ENCODE measurements at regions of chr19 and their contacts with region 1.

Region 1: GRCh38 chr19:48993175-48994034 is at the starts of genes GYS1 and RUVBL2:
- DNase-seq: peak; percentile 98
- H3K4me3 ChIP-seq: peak within 1 kb of the TSS; percentile 94
- H3K27me3 ChIP-seq: no peaks in the 10 kb centered on the region
- CTCF ChIP-seq: peak; percentile 99
- polyA plus RNA-seq, gene GYS1: 36.0 and 49.7 TPM in 2 replicates
- polyA plus RNA-seq, gene RUVBL2: 138 and 221 TPM in 2 replicates

Region 2: DNA sequence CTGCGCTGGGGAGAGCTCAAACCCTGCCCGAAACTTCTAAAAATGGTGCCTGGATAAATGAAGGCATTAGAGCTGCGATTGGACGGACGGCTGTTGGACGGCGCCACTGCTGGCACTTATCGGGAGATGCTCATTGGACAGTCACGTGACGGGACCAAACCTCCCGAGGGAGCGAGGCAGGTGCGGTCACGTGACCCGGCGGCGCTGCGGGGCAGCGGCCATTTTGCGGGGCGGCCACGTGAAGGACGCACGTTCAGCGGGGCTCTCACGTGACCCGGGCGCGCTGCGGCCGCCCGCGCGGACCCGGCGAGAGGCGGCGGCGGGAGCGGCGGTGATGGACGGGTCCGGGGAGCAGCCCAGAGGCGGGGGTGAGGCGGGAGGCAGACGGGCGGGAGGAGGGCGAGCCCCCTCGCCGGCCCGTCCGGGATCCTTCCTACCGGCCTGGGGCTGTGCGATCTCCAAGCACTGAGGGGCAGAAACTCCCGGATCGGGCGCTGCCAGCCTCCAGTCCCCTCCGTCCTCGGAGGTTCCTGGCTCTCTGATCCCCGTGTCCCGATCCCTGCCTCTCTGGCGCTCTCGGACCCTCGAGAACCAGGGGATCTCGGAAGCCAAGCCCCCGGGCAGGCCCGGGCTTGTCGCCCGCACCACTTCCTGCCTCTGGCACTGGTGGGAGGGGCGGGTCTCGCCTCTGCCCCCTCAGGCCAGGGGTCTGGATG is 38.7 kb before region 1 on chr19 and contains the start of gene BAX:
- CTCF ChIA-PET with region 1: interaction called, 3 read pairs
- POLR2A ChIA-PET with region 1: interaction called, 10 read pairs
- DNase-seq: peak; percentile 68
- H3K4me3 ChIP-seq: peak within 1 kb of the TSS; percentile 95
- H3K27me3 ChIP-seq: no peaks in the 10 kb centered on the region
- CTCF ChIP-seq: no peak
- polyA plus RNA-seq, gene BAX: 141 and 159 TPM in 2 replicates

Region 3: GRCh38 chr19:48970923-48971395 is 22.4 kb before region 1 on chr19:
- CTCF ChIA-PET with region 1: interaction called, 11 read pairs
- POLR2A ChIA-PET with region 1: interaction called, 10 read pairs
- DNase-seq: no peak
- H3K4me3 ChIP-seq: no peak overlapping the region
- H3K27me3 ChIP-seq: no peaks in the 10 kb centered on the region
- CTCF ChIP-seq: peak; percentile 94

Region 4: GRCh38 chr19:48975947-48976847 is 17.2 kb before region 1 on chr19:
- CTCF ChIA-PET with region 1: interaction called, 44 read pairs
- POLR2A ChIA-PET with region 1: interaction called, 10 read pairs
- DNase-seq: no peak
- H3K4me3 ChIP-seq: no peak overlapping the region
- H3K27me3 ChIP-seq: no peaks in the 10 kb centered on the region
- CTCF ChIP-seq: peak; percentile 17; the same call in 1 of the 2 replicates

Region 5: GRCh38 chr19:48982280-48982679 is 11.1 kb before region 1 on chr19:
- CTCF ChIA-PET with region 1: interaction called, 44 read pairs
- POLR2A ChIA-PET with region 1: interaction called, 4 read pairs
- DNase-seq: no peak
- H3K4me3 ChIP-seq: no peak overlapping the region
- H3K27me3 ChIP-seq: no peaks in the 10 kb centered on the region
- CTCF ChIP-seq: no peak

Region 6: DNA sequence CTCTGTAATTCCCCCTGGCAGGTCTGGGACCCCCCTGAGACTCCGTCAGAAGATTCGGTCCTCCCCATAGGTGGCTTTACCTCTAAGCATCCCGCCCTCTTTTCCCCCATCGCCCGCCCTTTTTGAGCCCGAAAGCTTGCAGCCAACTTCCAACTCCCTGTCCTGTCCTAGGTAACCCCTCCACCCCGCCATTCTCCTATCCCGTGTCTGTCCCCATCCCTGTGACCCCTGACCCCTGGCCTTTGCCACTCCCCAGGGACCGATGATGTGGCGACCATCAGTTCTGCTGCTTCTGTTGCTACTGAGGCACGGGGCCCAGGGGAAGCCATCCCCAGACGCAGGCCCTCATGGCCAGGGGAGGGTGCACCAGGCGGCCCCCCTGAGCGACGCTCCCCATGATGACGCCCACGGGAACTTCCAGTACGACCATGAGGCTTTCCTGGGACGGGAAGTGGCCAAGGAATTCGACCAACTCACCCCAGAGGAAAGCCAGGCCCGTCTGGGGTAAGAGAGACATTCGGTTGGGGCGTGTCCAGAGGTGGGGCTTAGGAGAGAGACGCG is 534.9 kb after region 1 on chr19:
- CTCF ChIA-PET with region 1: no interaction called
- POLR2A ChIA-PET with region 1: interaction called, 10 read pairs
- DNase-seq: no peak
- H3K4me3 ChIP-seq: peak overlapping the region; percentile 73
- H3K27me3 ChIP-seq: no peaks in the 10 kb centered on the region
- CTCF ChIP-seq: no peak